ENCODE measurements at regions of chr7 and their contacts with region 1.

Region 1: DNA sequence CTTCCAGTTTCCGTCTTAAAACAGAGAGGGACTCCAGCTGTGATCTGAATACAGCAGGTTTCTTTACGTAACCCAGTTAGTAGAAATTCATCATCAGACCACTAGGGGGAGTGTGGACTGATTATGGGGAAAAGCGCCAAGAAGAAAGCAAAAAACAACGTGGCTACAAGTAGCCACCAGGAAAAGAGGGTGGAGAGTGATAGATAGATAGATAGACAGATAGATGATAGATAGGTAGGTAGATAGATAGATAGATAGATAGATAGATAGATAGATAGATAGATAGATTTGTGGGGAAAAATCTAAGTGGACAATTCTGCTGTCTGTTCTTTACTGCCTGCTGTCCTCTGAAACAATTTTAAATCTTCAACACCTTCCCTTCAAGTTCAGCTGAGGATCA is 12.7 kb upstream of the AKR1B10 start:
- DNase-seq: peak; percentile 83
- ATAC-seq: peak; percentile 62
- H3K4me3 ChIP-seq: no peak overlapping the region
- H3K27ac ChIP-seq: no peak overlapping the region
- H3K4me1 ChIP-seq: peaks cover 15 to 49% of the 10 kb centered on the region in 2 experiments
- H3K27me3 ChIP-seq: no peaks in the 10 kb centered on the region; the same call in 1 of the 2 replicates
- CTCF ChIP-seq: peak; percentile 73 to 86 (median 82)
- POLR2A ChIP-seq: no peak
- RAD21 ChIP-seq: peak; percentile 68

Region 2: DNA sequence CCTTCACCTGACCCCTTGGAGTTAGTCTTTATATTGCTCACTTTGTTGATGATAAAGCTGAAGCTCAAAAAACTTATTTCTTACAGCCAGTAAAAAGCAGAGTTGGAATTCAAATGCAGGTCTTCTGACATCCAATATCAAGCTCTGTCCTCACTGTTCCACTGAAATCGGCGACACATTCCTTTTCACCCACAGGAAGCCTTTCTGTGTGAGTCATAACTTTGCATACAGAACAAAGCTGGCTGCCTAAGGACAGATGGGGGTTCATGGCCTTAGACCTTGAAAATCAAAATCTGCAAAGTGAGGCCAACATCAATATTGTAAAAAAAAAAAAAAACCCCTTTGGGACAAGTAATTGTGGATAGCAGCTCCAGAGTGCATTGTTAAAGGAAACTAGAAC is 33.9 kb before region 1 on chr7:
- CTCF ChIA-PET with region 1: interaction called, 11 read pairs
- POLR2A ChIA-PET with region 1: no interaction called
- RAD21 ChIA-PET with region 1: no interaction called
- intact Hi-C with region 1: no loop called
- DNase-seq: peak; percentile 36
- ATAC-seq: peak; percentile 97
- H3K4me3 ChIP-seq: peak overlapping the region in 1 of 2 experiments; percentile 31; a peak in 2 of 4 replicates
- H3K27ac ChIP-seq: no peak overlapping the region
- H3K4me1 ChIP-seq: peaks cover 13 to 15% of the 10 kb centered on the region in 2 experiments
- H3K27me3 ChIP-seq: no peaks in the 10 kb centered on the region
- CTCF ChIP-seq: no peak
- POLR2A ChIP-seq: no peak
- RAD21 ChIP-seq: no peak

Region 3: GRCh38 chr7:134547397-134548054 is 32.9 kb after region 1 on chr7:
- CTCF ChIA-PET with region 1: interaction called, 5 read pairs
- POLR2A ChIA-PET with region 1: no interaction called
- RAD21 ChIA-PET with region 1: interaction called in 1 of 2 experiments, 3 read pairs
- intact Hi-C with region 1: loop called (anchors 1 kb)
- DNase-seq: peak; percentile 56
- ATAC-seq: peak; percentile 95
- H3K4me3 ChIP-seq: peak overlapping the region; percentile 19 to 41
- H3K27ac ChIP-seq: no peak overlapping the region
- H3K4me1 ChIP-seq: peaks cover 8 to 15% of the 10 kb centered on the region in 2 experiments; a peak in 3 of 4 replicates
- H3K27me3 ChIP-seq: 0 out of 2 replicates have a peak, but pooled peaks cover 5% of the 10 kb centered on the region
- CTCF ChIP-seq: peak; percentile 76 to 94 (median 82)
- POLR2A ChIP-seq: no peak
- RAD21 ChIP-seq: peak; percentile 67

Region 4: GRCh38 chr7:134605973-134606923 is 91.6 kb after region 1 on chr7:
- CTCF ChIA-PET with region 1: interaction called, 9 read pairs
- POLR2A ChIA-PET with region 1: no interaction called
- RAD21 ChIA-PET with region 1: interaction called in 1 of 2 experiments, 3 read pairs
- intact Hi-C with region 1: loop called (anchors 1 kb)
- DNase-seq: peak; percentile 34
- ATAC-seq: peak; percentile 99
- H3K4me3 ChIP-seq: peak overlapping the region; percentile 7 to 34; a peak in 1 of 4 replicates
- H3K27ac ChIP-seq: no peak overlapping the region
- H3K4me1 ChIP-seq: peaks cover 0 to 4% of the 10 kb centered on the region in 2 experiments; a peak in 1 of 4 replicates
- H3K27me3 ChIP-seq: peaks cover 5% of the 10 kb centered on the region; the same call in 1 of the 2 replicates
- CTCF ChIP-seq: peak; percentile 88 to 96 (median 89)
- POLR2A ChIP-seq: no peak
- RAD21 ChIP-seq: peak; percentile 93

Region 5: GRCh38 chr7:135186841-135187253 is 672.2 kb after region 1 on chr7:
- CTCF ChIA-PET with region 1: no interaction called
- POLR2A ChIA-PET with region 1: no interaction called
- RAD21 ChIA-PET with region 1: no interaction called
- intact Hi-C with region 1: no loop called
- DNase-seq: no peak
- ATAC-seq: no peak
- H3K4me3 ChIP-seq: no peak overlapping the region
- H3K27ac ChIP-seq: no peak overlapping the region
- H3K4me1 ChIP-seq: no peaks in the 10 kb centered on the region
- H3K27me3 ChIP-seq: no peaks in the 10 kb centered on the region
- CTCF ChIP-seq: no peak
- POLR2A ChIP-seq: no peak
- RAD21 ChIP-seq: no peak

Measured in HCT116 (cell line).